ENCODE measurements at regions of chr17 and their contacts with region 1.

Region 1: GRCh38 chr17:65100316-65101140 is 36.6 kb upstream of the RGS9 start:
- DNase-seq: peak; percentile 77 to 83 (median 81)
- H3K4me3 ChIP-seq: peak overlapping the region; percentile 65 to 77
- H3K4me3 Mint-ChIP-seq: peak overlapping the region; percentile 87 to 96 (median 90)
- H3K27ac ChIP-seq: peak overlapping the region; percentile 61
- H3K27ac Mint-ChIP-seq: peak overlapping the region; percentile 85 to 97 (median 93)
- H3K4me1 ChIP-seq: peaks cover 26% of the 10 kb centered on the region
- H3K4me1 Mint-ChIP-seq: peaks cover 18 to 33% (median 26%) of the 10 kb centered on the region in 4 donors
- H3K27me3 ChIP-seq: no peaks in the 10 kb centered on the region
- H3K27me3 Mint-ChIP-seq: peaks cover 0 to 1% of the 10 kb centered on the region in 2 donors

Region 2: GRCh38 chr17:64938925-64939474 is 161.5 kb before region 1 on chr17:
- CTCF ChIA-PET with region 1: interaction called, 16 read pairs
- POLR2A ChIA-PET with region 1: no interaction called
- intact Hi-C with region 1: no loop called
- DNase-seq: peak in 1 of 5 donors; percentile 9
- H3K4me3 ChIP-seq: no peak overlapping the region
- H3K4me3 Mint-ChIP-seq: peak overlapping the region in 1 of 8 donors; percentile 57
- H3K27ac ChIP-seq: no peak overlapping the region
- H3K27ac Mint-ChIP-seq: no peak overlapping the region
- H3K4me1 ChIP-seq: no peaks in the 10 kb centered on the region
- H3K4me1 Mint-ChIP-seq: peaks cover 0 to 7% (median 2%) of the 10 kb centered on the region in 4 donors
- H3K27me3 ChIP-seq: no peaks in the 10 kb centered on the region
- H3K27me3 Mint-ChIP-seq: no peaks in the 10 kb centered on the region

Region 3: GRCh38 chr17:64975329-64976087 is 125.0 kb before region 1 on chr17:
- CTCF ChIA-PET with region 1: interaction called, 8 read pairs
- POLR2A ChIA-PET with region 1: interaction called, 23 read pairs
- intact Hi-C with region 1: no loop called
- DNase-seq: peak; percentile 97 to 99 (median 98)
- H3K4me3 ChIP-seq: peak overlapping the region; percentile 29 to 83
- H3K4me3 Mint-ChIP-seq: peak overlapping the region; percentile 91 to 99 (median 94)
- H3K27ac ChIP-seq: peak overlapping the region; percentile 93
- H3K27ac Mint-ChIP-seq: peak overlapping the region; percentile 98 to 100 (median 99)
- H3K4me1 ChIP-seq: peaks cover 38% of the 10 kb centered on the region
- H3K4me1 Mint-ChIP-seq: peaks cover 28 to 65% (median 39%) of the 10 kb centered on the region in 4 donors
- H3K27me3 ChIP-seq: no peaks in the 10 kb centered on the region
- H3K27me3 Mint-ChIP-seq: no peaks in the 10 kb centered on the region

Region 4: GRCh38 chr17:65027305-65027704 is 73.2 kb before region 1 on chr17:
- CTCF ChIA-PET with region 1: interaction called, 10 read pairs
- POLR2A ChIA-PET with region 1: interaction called, 4 read pairs
- intact Hi-C with region 1: loop called (anchors 2 kb)
- DNase-seq: peak; percentile 55 to 79 (median 58)
- H3K4me3 ChIP-seq: no peak overlapping the region
- H3K4me3 Mint-ChIP-seq: peak overlapping the region; percentile 75 to 90 (median 87)
- H3K27ac ChIP-seq: peak overlapping the region; percentile 49
- H3K27ac Mint-ChIP-seq: peak overlapping the region; percentile 90 to 98 (median 96)
- H3K4me1 ChIP-seq: peaks cover 99% of the 10 kb centered on the region
- H3K4me1 Mint-ChIP-seq: peaks cover 61 to 94% (median 78%) of the 10 kb centered on the region in 4 donors
- H3K27me3 ChIP-seq: no peaks in the 10 kb centered on the region
- H3K27me3 Mint-ChIP-seq: no peaks in the 10 kb centered on the region

Region 5: GRCh38 chr17:65078441-65079160 is 21.9 kb before region 1 on chr17:
- CTCF ChIA-PET with region 1: interaction called, 10 read pairs
- POLR2A ChIA-PET with region 1: interaction called, 3 read pairs
- intact Hi-C with region 1: no loop called
- DNase-seq: no peak
- H3K4me3 ChIP-seq: no peak overlapping the region
- H3K4me3 Mint-ChIP-seq: no peak overlapping the region
- H3K27ac ChIP-seq: no peak overlapping the region
- H3K27ac Mint-ChIP-seq: no peak overlapping the region
- H3K4me1 ChIP-seq: no peaks in the 10 kb centered on the region
- H3K4me1 Mint-ChIP-seq: no peaks in the 10 kb centered on the region
- H3K27me3 ChIP-seq: no peaks in the 10 kb centered on the region
- H3K27me3 Mint-ChIP-seq: no peaks in the 10 kb centered on the region

Region 6: DNA sequence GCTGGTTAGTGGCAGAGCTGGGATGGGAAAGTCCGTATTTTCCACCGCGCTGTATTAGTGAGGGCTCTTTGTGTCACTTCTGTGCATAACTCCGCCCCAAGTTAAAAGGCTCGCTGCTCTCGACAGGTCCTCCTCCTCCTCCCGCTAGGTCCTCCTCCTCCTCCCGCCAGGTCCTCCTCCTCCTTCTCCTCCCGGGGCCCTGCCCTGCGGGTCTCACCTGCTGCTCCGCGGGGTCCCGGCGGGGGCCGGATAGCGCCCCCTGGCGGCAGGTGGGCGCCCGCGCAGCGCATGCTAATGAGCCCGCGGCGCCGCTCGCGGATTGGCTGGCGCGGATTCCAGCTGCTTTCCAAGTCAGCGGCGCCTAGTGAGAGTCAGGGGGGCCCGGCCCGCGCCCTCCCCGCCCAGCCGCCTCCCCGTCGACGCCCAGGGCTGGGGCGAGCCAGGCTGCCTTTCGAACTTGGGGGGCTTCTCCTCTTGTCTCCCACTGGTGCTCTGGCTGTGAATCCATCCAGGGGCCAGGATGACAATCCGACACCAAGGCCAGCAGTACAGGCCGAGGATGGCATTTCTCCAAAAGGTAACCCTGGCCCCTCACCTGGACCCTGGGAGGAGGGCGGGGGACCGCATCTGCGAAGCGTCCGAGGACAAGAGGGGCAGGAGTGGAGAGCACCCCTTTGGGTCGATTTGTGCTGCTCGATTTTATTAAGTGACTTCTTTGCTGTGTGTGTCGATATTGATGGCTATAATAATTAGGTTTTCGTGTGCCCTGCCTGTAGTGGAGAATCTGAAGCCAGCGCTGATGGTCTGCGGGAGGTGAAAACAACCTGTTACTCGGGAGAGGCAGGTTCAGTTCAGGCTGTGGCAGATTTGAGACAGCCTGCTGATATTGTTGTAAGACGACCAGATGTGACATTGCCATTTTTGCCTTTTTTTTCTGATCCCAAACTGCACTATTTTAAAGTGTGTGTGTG is 36.8 kb after region 1 on chr17 and contains the start of gene RGS9:
- CTCF ChIA-PET with region 1: interaction called, 13 read pairs
- POLR2A ChIA-PET with region 1: interaction called, 5 read pairs
- intact Hi-C with region 1: loop called (anchors 1 kb)
- DNase-seq: peak; percentile 84 to 88 (median 85)
- H3K4me3 ChIP-seq: peak within 1 kb of the TSS; percentile 36 to 50
- H3K4me3 Mint-ChIP-seq: peak within 1 kb of the TSS; percentile 76 to 91 (median 85)
- H3K27ac ChIP-seq: no peak within 1 kb of the TSS
- H3K27ac Mint-ChIP-seq: peak within 1 kb of the TSS in 6 of 7 donors; percentile 57 to 85 (median 74)
- H3K4me1 ChIP-seq: peaks cover 26% of the 10 kb centered on the region
- H3K4me1 Mint-ChIP-seq: peaks cover 11 to 41% (median 22%) of the 10 kb centered on the region in 4 donors
- H3K27me3 ChIP-seq: no peaks in the 10 kb centered on the region
- H3K27me3 Mint-ChIP-seq: peaks cover 0 to 1% of the 10 kb centered on the region in 2 donors
- total RNA-seq, gene RGS9: 0.67 to 0.84 TPM

Region 7: DNA sequence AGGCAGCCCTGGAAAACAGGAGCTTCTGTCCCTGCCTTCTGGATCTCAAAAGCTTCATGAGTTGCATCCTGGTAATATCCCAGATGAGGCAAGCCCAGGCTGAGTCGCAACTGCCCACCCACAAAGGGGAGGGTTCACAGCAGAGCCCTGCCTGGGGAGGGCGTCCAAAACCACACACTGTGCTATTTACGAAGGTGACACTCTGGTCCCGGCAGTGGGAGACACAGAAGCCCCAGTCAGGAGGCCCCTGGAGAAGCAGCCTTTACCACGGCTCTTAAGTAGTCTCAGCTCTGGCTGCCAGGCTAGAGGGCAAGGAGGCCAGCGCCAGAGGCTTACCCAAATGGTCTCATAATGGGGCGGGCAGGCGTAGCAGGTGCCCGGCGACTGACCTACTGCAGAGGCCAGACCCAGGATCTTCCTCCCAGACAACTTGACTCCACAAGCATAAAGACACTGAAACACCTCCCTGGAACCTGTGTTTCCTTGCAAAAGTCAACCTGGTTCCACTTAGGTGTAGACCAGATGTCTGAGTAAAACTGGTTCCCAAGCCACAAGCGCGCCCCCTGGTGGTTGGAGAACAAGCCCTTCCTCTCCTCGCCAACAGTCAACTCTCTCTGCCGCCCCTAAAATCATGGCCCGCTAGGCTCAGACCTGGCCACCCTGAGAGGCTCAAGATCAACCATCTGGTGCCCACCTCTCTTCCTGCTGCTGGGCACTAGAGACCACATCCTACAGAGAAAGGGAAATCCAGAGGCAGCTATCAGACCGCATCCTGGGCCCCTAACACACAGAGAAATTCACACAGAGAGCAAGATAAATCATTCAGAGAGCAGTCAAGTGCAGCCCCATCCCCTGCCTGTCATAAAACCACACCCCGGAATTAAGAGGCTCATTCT is 455.7 kb after region 1 on chr17:
- CTCF ChIA-PET with region 1: no interaction called
- POLR2A ChIA-PET with region 1: no interaction called
- intact Hi-C with region 1: no loop called
- DNase-seq: peak; percentile 86 to 89 (median 87)
- H3K4me3 ChIP-seq: peak overlapping the region; percentile 5 to 48
- H3K4me3 Mint-ChIP-seq: no peak overlapping the region
- H3K27ac ChIP-seq: peak overlapping the region; percentile 42
- H3K27ac Mint-ChIP-seq: no peak overlapping the region
- H3K4me1 ChIP-seq: peaks cover 27% of the 10 kb centered on the region
- H3K4me1 Mint-ChIP-seq: peaks cover 19 to 31% (median 25%) of the 10 kb centered on the region in 4 donors
- H3K27me3 ChIP-seq: no peaks in the 10 kb centered on the region
- H3K27me3 Mint-ChIP-seq: no peaks in the 10 kb centered on the region